Activated T-helper 2 cell treated with anti-CD3 and anti-CD28 coated beads, Interferon-gamma antibody, Interleukin-2, Interleukin-4, amounts not matched to agents 10 μg/mL and 5 μg/mL and 100 μg/mL, durations not matched to agents 14 hours and 24 hours and 36 hours (primary cell): ENCODE measurements at regions of chrX and their contacts with region 1.

Region 1: GRCh38 chrX:15471016-15471415 is 22.1 kb downstream of the PIR start:
- DNase-seq: peak; percentile 20
- H3K4me3 Mint-ChIP-seq: no peak overlapping the region
- H3K27ac Mint-ChIP-seq: no peak overlapping the region
- H3K4me1 Mint-ChIP-seq: no peaks in the 10 kb centered on the region
- H3K27me3 Mint-ChIP-seq: no peaks in the 10 kb centered on the region

Region 2: DNA sequence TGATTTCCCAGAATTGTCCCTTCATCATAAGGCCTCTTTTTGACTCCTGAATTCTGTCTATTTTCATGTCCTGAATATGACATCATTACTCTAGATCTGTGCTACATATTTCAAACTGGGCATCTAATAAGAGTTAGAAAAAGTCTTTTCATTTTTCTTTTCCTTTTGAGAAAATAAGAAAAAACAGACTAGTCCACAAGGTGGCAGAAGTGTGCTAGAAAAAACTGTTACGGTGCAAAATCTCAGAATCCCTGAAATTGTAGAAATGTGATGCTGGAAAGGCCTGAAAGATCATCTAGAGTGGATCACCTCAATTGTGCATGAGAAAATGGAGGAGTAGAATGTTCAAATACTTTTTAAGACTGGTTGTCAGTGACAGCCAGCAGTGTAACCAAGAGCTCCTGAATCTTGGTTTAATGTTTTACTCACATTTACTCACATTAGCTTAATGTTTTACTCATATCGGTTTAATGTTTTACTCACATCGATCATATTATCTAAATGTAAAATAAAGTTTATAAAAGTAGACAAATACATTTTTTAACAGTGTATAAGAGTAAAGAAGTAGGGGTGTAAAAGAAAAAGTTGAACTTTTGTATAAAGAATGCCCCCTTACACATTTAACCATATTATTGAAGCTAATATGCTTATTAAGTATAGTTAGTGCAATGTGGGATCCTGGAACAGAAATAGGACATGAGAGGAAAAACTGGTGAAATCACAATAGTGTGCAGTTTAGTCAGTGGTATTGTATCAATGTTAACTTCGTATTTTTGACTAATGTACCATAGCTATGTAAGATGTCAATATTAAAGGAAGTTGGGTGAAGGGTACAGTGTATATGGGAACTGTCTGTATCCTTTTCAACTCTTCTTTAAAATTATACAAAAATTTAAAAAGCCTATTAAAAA is 170.8 kb before region 1 on chrX:
- intact Hi-C with region 1: loop called (anchors 5 kb)
- DNase-seq: no peak
- H3K4me3 Mint-ChIP-seq: no peak overlapping the region
- H3K27ac Mint-ChIP-seq: no peak overlapping the region
- H3K4me1 Mint-ChIP-seq: peaks cover 7% of the 10 kb centered on the region
- H3K27me3 Mint-ChIP-seq: no peaks in the 10 kb centered on the region

Region 3: GRCh38 chrX:15349046-15349445 is 122.0 kb before region 1 on chrX:
- intact Hi-C with region 1: loop called (anchors 1 kb)
- DNase-seq: no peak
- H3K4me3 Mint-ChIP-seq: no peak overlapping the region
- H3K27ac Mint-ChIP-seq: no peak overlapping the region
- H3K4me1 Mint-ChIP-seq: no peaks in the 10 kb centered on the region
- H3K27me3 Mint-ChIP-seq: peaks cover 5% of the 10 kb centered on the region

Region 4: GRCh38 chrX:15493118-15493962 is 22.3 kb after region 1 on chrX and contains the start of gene PIR:
- intact Hi-C with region 1: loop called (anchors 2 kb)
- DNase-seq: peak; percentile 55
- H3K4me3 Mint-ChIP-seq: peak within 1 kb of the TSS; percentile 81
- H3K27ac Mint-ChIP-seq: peak within 1 kb of the TSS; percentile 47
- H3K4me1 Mint-ChIP-seq: peaks cover 20% of the 10 kb centered on the region
- H3K27me3 Mint-ChIP-seq: peaks cover 5% of the 10 kb centered on the region
- total RNA-seq, gene PIR: 5.1 and 5.9 TPM in 2 replicates

Region 5: DNA sequence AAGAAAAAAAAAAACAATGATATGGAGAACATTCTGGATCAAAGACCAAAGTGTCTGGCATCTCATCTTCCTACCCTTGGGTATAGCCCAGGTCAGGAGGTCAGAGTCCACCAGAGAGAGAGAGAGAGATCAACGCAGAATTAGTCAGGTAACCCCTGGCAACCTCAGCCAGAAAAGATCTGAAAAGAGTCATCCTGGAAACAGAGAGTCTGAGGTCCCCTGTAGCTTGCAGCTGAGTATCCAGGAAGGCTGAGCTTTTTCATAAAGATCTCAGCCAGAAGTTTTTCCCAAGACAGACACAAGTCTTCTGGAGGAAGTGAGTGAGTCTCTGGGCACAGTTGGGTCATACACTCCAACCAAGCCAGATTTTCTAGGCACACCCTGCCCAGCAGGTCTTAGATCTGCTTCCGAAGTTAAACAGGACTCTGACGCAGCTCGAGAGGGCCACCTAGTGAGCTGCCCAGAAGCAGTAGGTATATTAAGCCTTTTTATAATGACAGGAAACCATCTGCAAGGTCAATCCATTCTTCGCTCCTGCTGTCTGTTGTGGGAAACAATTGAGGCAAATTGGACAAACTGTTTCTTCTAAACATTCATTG is 94.1 kb after region 1 on chrX:
- intact Hi-C with region 1: loop called (anchors 1 kb)
- DNase-seq: peak; percentile 9
- H3K4me3 Mint-ChIP-seq: no peak overlapping the region
- H3K27ac Mint-ChIP-seq: no peak overlapping the region
- H3K4me1 Mint-ChIP-seq: no peaks in the 10 kb centered on the region
- H3K27me3 Mint-ChIP-seq: peaks cover 5% of the 10 kb centered on the region